MCF 10A (cell line): ENCODE measurements at regions of chr3 and their contacts with region 1.

Region 1: DNA sequence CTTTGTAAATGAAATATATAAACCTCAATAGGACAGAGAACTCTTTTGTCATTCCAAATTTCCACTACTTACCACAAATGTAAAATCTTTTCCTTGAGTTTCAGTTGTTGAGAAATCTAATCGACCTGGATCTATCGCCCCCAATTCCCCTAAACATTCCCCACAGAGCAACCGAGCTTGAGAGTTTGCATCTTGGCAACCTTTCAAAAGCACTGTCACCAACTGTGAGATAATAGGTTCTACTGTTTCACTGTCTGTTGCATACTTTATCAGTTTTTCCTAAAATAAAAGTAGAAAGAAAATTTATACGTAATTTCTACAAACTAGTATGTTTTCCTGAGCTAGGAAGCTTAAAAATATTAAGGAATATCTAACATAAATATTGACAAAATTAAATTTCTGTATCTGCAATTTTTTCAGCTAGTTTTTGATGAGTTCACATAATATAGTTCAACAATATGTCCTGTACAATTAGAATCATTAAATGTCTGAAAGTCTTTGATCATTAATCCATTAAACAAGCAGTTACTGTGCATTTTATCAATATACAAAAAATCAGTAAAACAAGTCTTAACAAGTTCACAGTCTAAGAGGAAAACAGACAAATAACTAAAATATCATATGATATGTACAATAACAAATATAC is 54.5 kb downstream of the ATR start:
- DNase-seq: no peak
- H3K4me3 Mint-ChIP-seq: no peak overlapping the region
- H3K27ac Mint-ChIP-seq: no peak overlapping the region
- H3K4me1 Mint-ChIP-seq: no peaks in the 10 kb centered on the region
- H3K27me3 Mint-ChIP-seq: no peaks in the 10 kb centered on the region
- CTCF ChIP-seq: no peak

Region 2: DNA sequence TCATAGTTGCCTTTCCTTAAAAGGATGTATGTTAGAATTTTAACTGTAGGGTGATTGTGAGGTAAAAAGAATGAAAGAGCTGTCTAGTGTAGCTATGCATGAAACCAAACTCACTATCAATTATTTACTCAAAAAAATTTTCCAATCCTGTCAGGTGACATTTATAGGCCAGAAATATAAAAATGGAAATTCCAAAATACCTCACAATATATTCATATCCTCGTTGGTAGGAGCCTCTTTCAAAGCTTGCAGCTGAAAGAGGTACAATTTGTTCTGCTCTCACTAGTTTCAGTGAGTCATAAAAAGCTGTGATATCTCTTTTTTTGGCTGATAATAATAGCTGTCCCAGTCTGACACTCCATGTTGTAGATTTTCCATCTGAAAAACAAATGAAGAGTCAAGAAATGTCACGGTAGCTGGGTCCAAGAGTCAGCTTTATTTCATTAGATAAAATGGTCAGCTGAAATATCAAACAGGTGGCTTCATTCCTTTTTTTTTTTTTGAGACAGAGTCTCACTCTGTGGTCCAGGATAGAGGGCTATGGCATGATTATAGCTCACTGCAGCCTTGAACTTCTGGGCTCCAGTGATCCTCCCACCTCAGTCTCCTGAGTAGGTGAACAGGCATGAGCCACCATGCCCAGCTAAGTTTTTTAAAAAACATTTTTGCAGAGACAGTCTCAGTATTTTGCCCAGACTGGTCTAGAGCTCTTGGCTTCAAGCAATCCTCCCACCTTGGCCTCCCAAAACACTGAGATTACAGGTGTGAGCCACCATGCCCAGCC is 25.5 kb before region 1 on chr3:
- CTCF ChIA-PET with region 1: no interaction called
- POLR2A ChIA-PET with region 1: no interaction called
- intact Hi-C with region 1: loop called (anchors 1 kb)
- DNase-seq: no peak
- H3K4me3 Mint-ChIP-seq: no peak overlapping the region
- H3K27ac Mint-ChIP-seq: peak overlapping the region; percentile 76
- H3K4me1 Mint-ChIP-seq: peaks cover 16% of the 10 kb centered on the region
- H3K27me3 Mint-ChIP-seq: no peaks in the 10 kb centered on the region
- CTCF ChIP-seq: no peak

Region 3: GRCh38 chr3:142560118-142560517 is 36.1 kb after region 1 on chr3:
- CTCF ChIA-PET with region 1: no interaction called
- POLR2A ChIA-PET with region 1: no interaction called
- intact Hi-C with region 1: no loop called
- DNase-seq: no peak
- H3K4me3 Mint-ChIP-seq: no peak overlapping the region
- H3K27ac Mint-ChIP-seq: no peak overlapping the region
- H3K4me1 Mint-ChIP-seq: no peaks in the 10 kb centered on the region
- H3K27me3 Mint-ChIP-seq: no peaks in the 10 kb centered on the region
- CTCF ChIP-seq: no peak